ENCODE measurements at regions of chr10 and their contacts with region 1.

Region 1: DNA sequence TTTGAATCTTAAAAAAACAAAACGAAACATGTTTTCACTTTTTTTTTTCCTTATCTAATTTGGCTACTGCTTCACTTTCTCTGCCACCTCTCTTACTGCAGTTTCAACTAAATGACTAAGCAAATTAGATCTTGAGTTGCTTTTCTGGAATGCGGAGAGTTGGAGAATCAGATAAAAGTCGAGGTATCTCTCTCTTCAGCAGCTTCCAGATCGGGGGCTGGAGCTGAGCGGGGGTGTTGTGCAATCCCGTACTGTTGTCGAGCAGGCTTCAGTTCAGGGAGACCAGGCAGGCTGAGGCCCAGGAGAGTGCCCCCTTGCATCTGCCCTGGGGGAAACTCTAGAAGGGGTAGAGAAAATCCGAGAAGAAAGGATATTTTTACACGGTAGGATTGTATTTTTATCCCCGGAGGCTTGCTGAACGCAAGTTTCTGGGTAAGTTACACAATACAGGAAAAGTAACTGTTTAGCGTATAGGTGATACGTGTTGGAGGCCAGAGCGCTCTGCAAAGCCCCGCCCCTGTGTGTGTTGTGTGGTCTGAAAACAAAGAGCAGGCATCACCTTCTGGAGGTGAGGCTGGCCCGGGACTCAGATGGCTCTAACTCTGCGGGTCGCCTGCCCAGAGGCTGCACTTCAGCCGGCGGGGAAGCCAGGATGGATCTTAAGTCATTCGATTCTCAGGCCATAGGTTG is 116.6 kb downstream of the KLF6 start:
- DNase-seq: peak; percentile 83 to 89 (median 85)
- H3K4me3 ChIP-seq: peak overlapping the region; percentile 65 to 92
- H3K4me3 Mint-ChIP-seq: peak overlapping the region; percentile 86 to 96 (median 92)
- H3K27ac ChIP-seq: peak overlapping the region; percentile 67
- H3K27ac Mint-ChIP-seq: peak overlapping the region; percentile 96 to 98 (median 97)
- H3K4me1 ChIP-seq: peaks cover 44% of the 10 kb centered on the region
- H3K4me1 Mint-ChIP-seq: peaks cover 32 to 58% (median 43%) of the 10 kb centered on the region in 4 donors
- H3K27me3 ChIP-seq: no peaks in the 10 kb centered on the region
- H3K27me3 Mint-ChIP-seq: no peaks in the 10 kb centered on the region

Region 2: DNA sequence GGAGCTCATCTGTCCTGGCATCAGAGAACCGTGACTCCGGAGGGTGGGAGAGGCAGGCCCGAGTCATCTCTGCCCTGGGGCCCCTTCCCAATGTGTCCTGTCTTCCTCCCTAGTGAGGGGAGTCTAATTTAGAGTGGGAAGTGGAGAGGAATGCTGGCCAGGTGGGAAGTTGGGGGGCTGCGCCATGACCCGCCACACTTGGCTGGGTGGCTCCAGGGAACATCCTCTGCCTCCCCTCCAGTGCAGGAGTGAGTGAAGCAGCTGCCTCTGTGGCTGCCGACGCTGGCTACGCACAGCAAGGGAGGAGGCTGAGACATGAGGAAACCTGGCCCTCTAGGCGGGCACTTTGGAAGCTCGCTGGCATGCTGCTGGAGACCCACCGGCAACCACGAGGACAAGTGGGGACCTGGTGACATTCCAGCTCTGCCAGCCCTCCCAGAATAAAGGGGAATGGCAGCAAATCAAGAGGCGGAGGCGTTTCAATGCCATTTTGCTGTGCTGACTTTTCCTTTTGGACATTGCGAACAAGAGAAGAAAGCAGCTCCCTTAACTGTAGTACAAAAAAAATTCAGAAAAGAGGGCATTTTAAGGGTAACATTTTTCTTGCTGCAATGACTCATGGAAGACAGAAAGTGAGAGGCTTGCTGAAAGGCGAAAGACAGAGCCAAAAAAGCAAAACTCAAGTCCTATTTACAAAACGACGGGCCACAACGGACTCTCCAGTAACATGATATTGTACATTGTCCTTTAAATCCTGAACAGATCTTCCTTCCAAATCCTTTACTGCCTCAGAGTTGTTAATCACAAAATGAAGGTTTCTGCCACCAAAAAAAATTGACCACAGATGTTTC is 374.6 kb before region 1 on chr10:
- CTCF ChIA-PET with region 1: no interaction called
- POLR2A ChIA-PET with region 1: no interaction called
- intact Hi-C with region 1: no loop called
- DNase-seq: no peak
- H3K4me3 ChIP-seq: no peak overlapping the region
- H3K4me3 Mint-ChIP-seq: no peak overlapping the region
- H3K27ac ChIP-seq: no peak overlapping the region
- H3K27ac Mint-ChIP-seq: no peak overlapping the region
- H3K4me1 ChIP-seq: no peaks in the 10 kb centered on the region
- H3K4me1 Mint-ChIP-seq: no peaks in the 10 kb centered on the region
- H3K27me3 ChIP-seq: no peaks in the 10 kb centered on the region
- H3K27me3 Mint-ChIP-seq: peaks cover under 1 to 8% of the 10 kb centered on the region in 2 donors

Region 3: DNA sequence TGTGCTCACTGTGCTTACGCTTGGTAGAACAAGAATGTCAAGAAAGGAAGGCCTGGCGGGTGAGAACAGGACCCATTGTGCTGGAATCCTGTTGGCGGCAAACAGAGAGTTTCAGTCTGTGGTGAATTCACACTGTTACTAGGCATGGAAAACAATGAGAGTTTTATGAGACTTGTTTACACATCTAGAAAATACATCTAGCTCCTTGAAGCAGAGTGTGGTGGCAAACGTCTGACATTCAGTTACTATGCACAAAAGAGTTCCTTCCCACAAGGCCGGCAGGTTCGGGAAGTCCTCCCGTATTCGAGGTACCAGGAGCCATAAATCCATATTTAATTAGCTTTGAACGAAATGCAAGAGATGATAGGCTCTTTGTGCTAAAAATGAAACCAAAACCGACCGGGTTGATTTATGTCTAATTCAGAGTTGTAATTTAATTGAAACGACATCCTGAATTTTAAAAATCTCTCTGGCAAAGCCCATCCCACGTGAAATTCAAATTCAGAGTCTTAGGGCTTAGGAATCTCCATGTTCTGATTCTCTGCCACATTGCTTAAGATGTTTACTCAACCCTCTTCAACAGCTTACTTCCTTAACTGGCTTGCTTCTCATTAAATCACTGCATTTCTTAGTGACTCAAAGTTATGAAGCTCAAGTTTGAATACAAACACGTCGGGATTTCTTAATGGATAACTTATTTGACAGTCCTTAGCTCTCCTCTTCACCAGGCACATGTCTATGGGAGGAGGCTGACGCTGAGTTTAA is 196.0 kb before region 1 on chr10:
- CTCF ChIA-PET with region 1: no interaction called
- POLR2A ChIA-PET with region 1: no interaction called
- intact Hi-C with region 1: loop called (anchors 10 kb)
- DNase-seq: peak in 3 of 5 donors; percentile 9 to 13 (median 12)
- H3K4me3 ChIP-seq: peak overlapping the region; percentile 10 to 58
- H3K4me3 Mint-ChIP-seq: peak overlapping the region; percentile 86 to 93 (median 90)
- H3K27ac ChIP-seq: peak overlapping the region; percentile 29
- H3K27ac Mint-ChIP-seq: peak overlapping the region; percentile 62 to 94 (median 92)
- H3K4me1 ChIP-seq: peaks cover 40% of the 10 kb centered on the region
- H3K4me1 Mint-ChIP-seq: peaks cover 26 to 54% (median 33%) of the 10 kb centered on the region in 4 donors
- H3K27me3 ChIP-seq: no peaks in the 10 kb centered on the region
- H3K27me3 Mint-ChIP-seq: peaks cover 0 to 2% of the 10 kb centered on the region in 2 donors

Region 4: GRCh38 chr10:3486345-3487065 is 181.9 kb before region 1 on chr10:
- CTCF ChIA-PET with region 1: no interaction called
- POLR2A ChIA-PET with region 1: no interaction called
- intact Hi-C with region 1: no loop called
- DNase-seq: no peak
- H3K4me3 ChIP-seq: no peak overlapping the region
- H3K4me3 Mint-ChIP-seq: no peak overlapping the region
- H3K27ac ChIP-seq: no peak overlapping the region
- H3K27ac Mint-ChIP-seq: no peak overlapping the region
- H3K4me1 ChIP-seq: peaks cover 20% of the 10 kb centered on the region
- H3K4me1 Mint-ChIP-seq: peaks cover 9 to 27% (median 14%) of the 10 kb centered on the region in 4 donors
- H3K27me3 ChIP-seq: no peaks in the 10 kb centered on the region
- H3K27me3 Mint-ChIP-seq: peaks cover 3% of the 10 kb centered on the region in 2 donors

Region 5: GRCh38 chr10:3757638-3758490 is 89.4 kb after region 1 on chr10:
- CTCF ChIA-PET with region 1: no interaction called
- POLR2A ChIA-PET with region 1: interaction called, 4 read pairs
- intact Hi-C with region 1: loop called (anchors 5 kb)
- DNase-seq: peak; percentile 43 to 90 (median 46)
- H3K4me3 ChIP-seq: peak overlapping the region in 1 of 2 donors; percentile 1
- H3K4me3 Mint-ChIP-seq: peak overlapping the region; percentile 26 to 90 (median 72)
- H3K27ac ChIP-seq: peak overlapping the region; percentile 74
- H3K27ac Mint-ChIP-seq: peak overlapping the region; percentile 93 to 98 (median 97)
- H3K4me1 ChIP-seq: peaks cover 81% of the 10 kb centered on the region
- H3K4me1 Mint-ChIP-seq: peaks cover 41 to 81% (median 61%) of the 10 kb centered on the region in 4 donors
- H3K27me3 ChIP-seq: no peaks in the 10 kb centered on the region
- H3K27me3 Mint-ChIP-seq: no peaks in the 10 kb centered on the region